PC-9 (cell line): ENCODE measurements at regions of chr14 and their contacts with region 1.

Region 1: DNA sequence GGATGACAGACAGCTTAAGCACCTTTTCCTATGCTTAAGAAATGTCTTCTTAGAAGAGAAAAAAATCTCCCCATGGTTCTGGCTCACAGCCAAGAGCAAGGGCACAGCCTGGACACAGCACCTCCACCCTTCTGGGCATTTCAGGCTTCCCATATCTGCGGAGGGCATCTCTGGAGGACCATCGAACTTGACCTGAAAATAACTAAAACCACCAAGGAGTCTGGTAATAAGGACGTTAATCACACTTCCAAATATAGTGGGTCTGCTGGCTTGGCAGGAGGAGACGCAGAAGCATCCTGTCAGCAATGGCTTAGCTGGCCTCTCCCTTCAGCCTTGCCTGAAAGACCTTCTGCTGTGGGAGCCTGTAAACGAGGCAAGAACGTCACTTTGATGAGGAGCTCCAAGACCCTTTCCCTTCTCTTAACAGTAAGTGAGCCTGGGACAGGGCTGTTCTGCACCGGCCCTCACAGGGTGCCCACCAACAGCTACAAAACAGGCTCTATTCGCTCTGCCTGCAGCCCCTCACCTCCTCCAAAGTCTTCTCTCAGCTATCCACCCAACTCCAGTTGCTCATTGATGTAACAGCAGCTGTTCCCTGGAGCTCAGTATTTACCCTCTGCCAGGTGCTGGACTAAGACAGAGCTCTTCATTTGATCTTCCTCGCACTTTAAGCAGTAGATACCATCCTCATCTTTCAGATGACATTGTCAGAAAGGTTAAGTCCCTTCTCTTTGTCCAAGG is 13.2 kb downstream of the SETD3 start:
- DNase-seq: no peak
- H3K4me3 ChIP-seq: no peak overlapping the region
- H3K27ac ChIP-seq: no peak overlapping the region
- H3K4me1 ChIP-seq: no peaks in the 10 kb centered on the region
- H3K27me3 ChIP-seq: no peaks in the 10 kb centered on the region
- CTCF ChIP-seq: no peak

Region 2: DNA sequence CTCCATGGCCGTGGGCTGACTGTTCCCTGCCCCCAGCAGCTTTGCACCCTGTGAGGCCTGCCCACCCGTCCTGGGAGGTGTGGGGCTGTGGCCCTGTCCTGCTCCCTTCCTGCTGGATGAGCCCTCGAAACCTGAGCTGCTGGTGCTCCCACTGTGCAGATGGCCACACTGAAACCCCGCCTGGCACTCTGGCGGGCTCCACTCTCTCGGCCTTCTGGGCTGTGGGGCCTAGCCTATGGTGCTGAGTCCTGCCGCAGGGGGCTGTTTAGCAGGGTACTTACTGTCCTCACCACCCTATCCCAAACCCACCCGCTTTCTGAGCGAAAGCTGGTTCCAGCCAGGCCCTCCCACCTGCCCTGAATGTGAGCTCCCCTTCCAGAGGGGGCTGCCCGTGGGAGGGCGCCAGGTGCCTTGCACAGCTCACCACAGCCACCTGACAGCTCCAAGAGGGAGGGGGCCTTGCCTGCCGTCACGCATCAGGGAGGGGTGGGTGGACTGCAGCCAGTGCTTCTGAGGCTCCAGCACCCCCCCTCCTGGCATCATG is 863.0 kb after region 1 on chr14:
- CTCF ChIA-PET with region 1: no interaction called
- POLR2A ChIA-PET with region 1: interaction called, 35 read pairs
- intact Hi-C with region 1: no loop called
- DNase-seq: no peak
- H3K4me3 ChIP-seq: no peak overlapping the region
- H3K27ac ChIP-seq: no peak overlapping the region
- H3K4me1 ChIP-seq: no peaks in the 10 kb centered on the region
- H3K27me3 ChIP-seq: no peaks in the 10 kb centered on the region
- CTCF ChIP-seq: no peak